HEK293 (cell line): ENCODE measurements at regions of chr21 and their contacts with region 1.

Region 1: DNA sequence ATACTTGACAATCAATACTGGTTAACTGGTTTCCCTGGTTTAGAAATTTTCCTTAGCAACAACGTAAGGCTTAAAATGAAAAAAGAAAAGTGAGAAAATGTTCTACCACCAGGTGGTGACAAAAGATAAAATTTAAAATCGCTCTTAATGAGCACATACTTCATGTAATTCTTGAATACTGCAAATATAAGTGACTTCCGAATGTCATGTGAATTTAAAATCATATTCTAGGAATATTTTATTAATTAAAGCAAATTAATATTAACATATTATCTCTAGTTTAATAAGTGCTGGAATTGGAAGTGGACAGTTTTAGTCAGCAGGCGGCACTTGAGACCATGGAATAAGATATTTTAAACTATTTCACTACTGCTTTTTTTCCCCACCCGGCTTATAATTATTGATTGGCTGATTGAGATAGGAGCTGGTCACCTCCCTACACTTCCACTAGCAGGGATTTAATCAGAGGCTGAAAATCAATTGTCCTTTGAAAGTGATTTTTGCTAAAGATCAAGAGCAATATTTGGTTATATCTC is 5.0 kb upstream of the ADAMTS1 start:
- H3K4me3 ChIP-seq: no peak overlapping the region
- H3K27ac ChIP-seq: no peak overlapping the region
- H3K4me1 ChIP-seq: no peaks in the 10 kb centered on the region; the same call in 1 of the 2 replicates
- CTCF ChIP-seq: peak; percentile 42; the same call in 1 of the 2 replicates

Region 2: GRCh38 chr21:26124421-26124833 is 725.7 kb before region 1 on chr21:
- CTCF ChIA-PET with region 1: no interaction called
- POLR2A ChIA-PET with region 1: no interaction called
- H3K4me3 ChIP-seq: no peak overlapping the region
- H3K27ac ChIP-seq: peak overlapping the region; percentile 20
- H3K4me1 ChIP-seq: peaks cover 52% of the 10 kb centered on the region
- CTCF ChIP-seq: no peak

Region 3: GRCh38 chr21:26769613-26770188 is 80.5 kb before region 1 on chr21:
- CTCF ChIA-PET with region 1: interaction called, 11 read pairs
- POLR2A ChIA-PET with region 1: interaction called, 14 read pairs
- H3K4me3 ChIP-seq: no peak overlapping the region
- H3K27ac ChIP-seq: no peak overlapping the region
- H3K4me1 ChIP-seq: no peaks in the 10 kb centered on the region
- CTCF ChIP-seq: no peak

Region 4: GRCh38 chr21:26814374-26814773 is 35.8 kb before region 1 on chr21:
- CTCF ChIA-PET with region 1: interaction called, 16 read pairs
- POLR2A ChIA-PET with region 1: interaction called, 34 read pairs
- H3K4me3 ChIP-seq: no peak overlapping the region
- H3K27ac ChIP-seq: no peak overlapping the region
- H3K4me1 ChIP-seq: no peaks in the 10 kb centered on the region
- CTCF ChIP-seq: no peak

Region 5: GRCh38 chr21:27026501-27026900 is 176.3 kb after region 1 on chr21:
- CTCF ChIA-PET with region 1: no interaction called
- POLR2A ChIA-PET with region 1: no interaction called
- H3K4me3 ChIP-seq: no peak overlapping the region
- H3K27ac ChIP-seq: no peak overlapping the region
- H3K4me1 ChIP-seq: no peaks in the 10 kb centered on the region
- CTCF ChIP-seq: no peak

Region 6: DNA sequence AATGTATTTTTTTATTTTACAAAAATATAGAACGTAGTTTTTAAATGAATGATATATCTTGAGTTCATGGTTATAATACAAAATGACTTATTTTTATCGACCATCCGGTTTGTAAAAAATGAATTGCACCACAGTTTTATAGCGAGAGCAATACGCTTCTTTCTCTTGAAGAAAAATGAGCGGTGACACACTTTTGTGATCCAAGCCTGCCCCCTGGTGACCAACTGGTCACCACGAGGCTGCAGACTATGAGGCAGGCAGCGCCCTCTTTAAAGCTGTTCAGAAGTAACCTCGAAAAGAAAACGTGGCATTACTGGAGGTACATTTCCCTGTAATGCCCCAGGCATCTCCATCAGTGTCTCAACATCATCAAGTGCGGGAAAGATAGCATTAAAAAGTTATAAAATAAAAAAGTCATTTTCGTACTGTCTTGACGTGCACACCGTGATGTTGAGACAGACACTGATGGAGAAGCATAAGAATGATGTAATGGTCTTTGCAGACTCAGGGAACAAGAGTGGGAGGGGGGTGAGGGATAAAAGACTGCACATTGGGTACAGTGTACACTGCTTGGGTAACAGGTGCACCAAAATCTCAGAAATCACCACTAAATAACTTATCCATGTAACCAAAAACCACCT is 850.9 kb after region 1 on chr21:
- CTCF ChIA-PET with region 1: interaction called, 76 read pairs
- POLR2A ChIA-PET with region 1: no interaction called
- H3K4me3 ChIP-seq: no peak overlapping the region; the same call in 1 of the 2 replicates
- H3K27ac ChIP-seq: no peak overlapping the region
- H3K4me1 ChIP-seq: no peaks in the 10 kb centered on the region
- CTCF ChIP-seq: peak; percentile 60